OCI-LY7 (cell line): ENCODE measurements at regions of chr1 and their contacts with region 1.

Region 1: GRCh38 chr1:244874974-244875579 is 10.7 kb upstream of the HNRNPU start:
- DNase-seq: no peak
- H3K4me3 ChIP-seq: no peak overlapping the region
- H3K27ac ChIP-seq: no peak overlapping the region
- H3K4me1 ChIP-seq: peaks cover 2% of the 10 kb centered on the region
- CTCF ChIP-seq: no peak

Region 2: DNA sequence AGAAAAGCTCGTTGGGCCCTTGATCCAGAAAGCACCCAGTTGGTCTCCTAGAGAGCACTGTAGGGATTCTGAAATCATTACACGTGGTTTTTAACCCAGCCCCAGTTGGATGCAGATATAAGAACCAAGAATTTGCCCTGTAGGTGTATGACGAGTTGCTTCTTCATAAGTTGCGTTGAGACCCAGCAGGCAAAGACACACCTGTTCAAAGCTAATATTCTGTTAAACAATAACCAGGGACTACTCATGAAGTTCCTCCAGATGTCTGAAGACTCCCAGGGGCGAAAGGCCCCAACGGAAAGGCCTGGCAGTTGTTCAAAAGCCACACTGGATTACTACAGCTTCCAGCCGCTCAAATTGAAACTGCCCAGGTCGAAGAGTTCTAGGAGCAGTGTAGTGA is 77.9 kb after region 1 on chr1:
- CTCF ChIA-PET with region 1: no interaction called
- POLR2A ChIA-PET with region 1: interaction called, 12 read pairs
- intact Hi-C with region 1: no loop called
- DNase-seq: no peak
- H3K4me3 ChIP-seq: no peak overlapping the region
- H3K27ac ChIP-seq: no peak overlapping the region
- H3K4me1 ChIP-seq: peaks cover 11% of the 10 kb centered on the region
- CTCF ChIP-seq: no peak